Naive thymus-derived CD4-positive, alpha-beta T cell (primary cell): ENCODE measurements at regions of chr9 and their contacts with region 1.

Region 1: DNA sequence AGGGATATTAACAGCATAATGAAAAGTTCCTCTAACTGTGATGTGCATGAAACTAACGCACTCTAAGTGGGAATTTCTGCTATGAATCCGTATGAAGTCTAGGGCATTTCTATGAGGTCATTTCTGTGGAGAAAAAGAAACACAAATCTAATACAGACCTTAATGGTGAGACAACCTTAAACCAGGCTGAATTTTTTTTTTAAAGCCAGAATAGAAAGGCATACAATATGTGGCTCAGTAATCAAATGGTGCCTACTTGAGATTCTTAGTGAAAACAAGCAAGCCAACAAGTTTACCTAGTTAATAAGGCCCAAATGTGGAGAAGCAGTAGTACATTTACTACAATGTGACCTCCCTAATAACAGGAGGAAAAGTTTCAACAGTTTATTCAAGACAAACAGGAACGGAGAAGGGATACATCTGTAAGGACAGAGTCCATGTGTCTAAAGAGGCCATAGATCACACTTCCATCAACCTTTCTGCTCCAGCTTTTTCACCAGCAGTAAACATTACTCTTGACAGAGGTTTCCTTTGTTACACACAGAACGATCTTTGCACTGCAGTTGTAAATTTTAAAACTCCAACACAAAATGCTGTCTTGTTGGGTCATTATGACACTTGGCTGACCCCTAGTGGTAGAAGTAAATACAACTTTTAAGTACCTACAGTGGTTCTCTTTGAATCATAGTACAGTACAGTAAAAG is 26.2 kb downstream of the CARNMT1 start:
- DNase-seq: peak in 7 of 9 donors; percentile 52 to 77 (median 68)
- ATAC-seq: peak; percentile 98
- H3K4me3 ChIP-seq: no peak overlapping the region
- H3K4me3 Mint-ChIP-seq: no peak overlapping the region
- H3K27ac ChIP-seq: no peak overlapping the region
- H3K27ac Mint-ChIP-seq: no peak overlapping the region
- H3K4me1 ChIP-seq: peaks cover 0 to 4% of the 10 kb centered on the region in 2 donors
- H3K4me1 Mint-ChIP-seq: peaks cover 0 to 8% (median 5%) of the 10 kb centered on the region in 7 donors
- H3K27me3 ChIP-seq: no peaks in the 10 kb centered on the region
- H3K27me3 Mint-ChIP-seq: no peaks in the 10 kb centered on the region

Region 2: GRCh38 chr9:74865177-74865576 is 136.7 kb before region 1 on chr9:
- CTCF ChIA-PET with region 1: no interaction called
- POLR2A ChIA-PET with region 1: no interaction called
- intact Hi-C with region 1: loop called in 1 of 2 experiments (anchors 10 kb)
- DNase-seq: no peak
- ATAC-seq: no peak
- H3K4me3 ChIP-seq: no peak overlapping the region
- H3K4me3 Mint-ChIP-seq: no peak overlapping the region
- H3K27ac ChIP-seq: no peak overlapping the region
- H3K27ac Mint-ChIP-seq: no peak overlapping the region
- H3K4me1 ChIP-seq: no peaks in the 10 kb centered on the region
- H3K4me1 Mint-ChIP-seq: peaks cover 0 to 9% (median 0%) of the 10 kb centered on the region in 7 donors
- H3K27me3 ChIP-seq: no peaks in the 10 kb centered on the region
- H3K27me3 Mint-ChIP-seq: no peaks in the 10 kb centered on the region

Region 3: GRCh38 chr9:74935008-74935407 is 66.9 kb before region 1 on chr9:
- CTCF ChIA-PET with region 1: no interaction called
- POLR2A ChIA-PET with region 1: no interaction called
- intact Hi-C with region 1: loop called in 1 of 2 experiments (anchors 1 kb)
- DNase-seq: no peak
- ATAC-seq: no peak
- H3K4me3 ChIP-seq: no peak overlapping the region
- H3K4me3 Mint-ChIP-seq: no peak overlapping the region
- H3K27ac ChIP-seq: no peak overlapping the region
- H3K27ac Mint-ChIP-seq: no peak overlapping the region
- H3K4me1 ChIP-seq: no peaks in the 10 kb centered on the region
- H3K4me1 Mint-ChIP-seq: no peaks in the 10 kb centered on the region
- H3K27me3 ChIP-seq: no peaks in the 10 kb centered on the region
- H3K27me3 Mint-ChIP-seq: peaks cover 0 to 26% (median 13%) of the 10 kb centered on the region in 5 donors

Region 4: GRCh38 chr9:75071530-75072124 is 69.8 kb after region 1 on chr9:
- CTCF ChIA-PET with region 1: interaction called, 6 read pairs
- POLR2A ChIA-PET with region 1: no interaction called
- intact Hi-C with region 1: loop called in 1 of 2 experiments (anchors 2 kb)
- DNase-seq: peak in 7 of 9 donors; percentile 20 to 75 (median 35)
- ATAC-seq: peak; percentile 79
- H3K4me3 ChIP-seq: no peak overlapping the region
- H3K4me3 Mint-ChIP-seq: peak overlapping the region in 1 of 10 donors; percentile 13
- H3K27ac ChIP-seq: peak overlapping the region; percentile 25
- H3K27ac Mint-ChIP-seq: peak overlapping the region; percentile 26 to 96 (median 79)
- H3K4me1 ChIP-seq: peaks cover 8 to 10% of the 10 kb centered on the region in 2 donors
- H3K4me1 Mint-ChIP-seq: peaks cover 14 to 35% (median 21%) of the 10 kb centered on the region in 7 donors
- H3K27me3 ChIP-seq: no peaks in the 10 kb centered on the region
- H3K27me3 Mint-ChIP-seq: no peaks in the 10 kb centered on the region